CD4-positive, alpha-beta T cell (primary cell): ENCODE measurements at regions of chr6 and their contacts with region 1.

Region 1: GRCh38 chr6:110270165-110270564 is 88.0 kb downstream of the METTL24 start:
- DNase-seq: no peak
- ATAC-seq: no peak
- H3K4me3 ChIP-seq: no peak overlapping the region
- H3K4me3 Mint-ChIP-seq: no peak overlapping the region
- H3K27ac ChIP-seq: no peak overlapping the region
- H3K27ac Mint-ChIP-seq: no peak overlapping the region
- H3K4me1 ChIP-seq: no peaks in the 10 kb centered on the region
- H3K4me1 Mint-ChIP-seq: no peaks in the 10 kb centered on the region
- H3K27me3 ChIP-seq: no peaks in the 10 kb centered on the region
- H3K27me3 Mint-ChIP-seq: peaks cover 6% of the 10 kb centered on the region
- CTCF ChIP-seq: no peak

Region 2: GRCh38 chr6:109139109-109139508 is 1131.1 kb before region 1 on chr6:
- CTCF ChIA-PET with region 1: no interaction called
- POLR2A ChIA-PET with region 1: no interaction called
- intact Hi-C with region 1: loop called in 1 of 2 experiments (anchors 10 kb)
- DNase-seq: no peak
- ATAC-seq: no peak
- H3K4me3 ChIP-seq: no peak overlapping the region
- H3K4me3 Mint-ChIP-seq: no peak overlapping the region
- H3K27ac ChIP-seq: no peak overlapping the region
- H3K27ac Mint-ChIP-seq: no peak overlapping the region
- H3K4me1 ChIP-seq: no peaks in the 10 kb centered on the region
- H3K4me1 Mint-ChIP-seq: no peaks in the 10 kb centered on the region
- H3K27me3 ChIP-seq: no peaks in the 10 kb centered on the region
- H3K27me3 Mint-ChIP-seq: no peaks in the 10 kb centered on the region
- CTCF ChIP-seq: no peak

Region 3: DNA sequence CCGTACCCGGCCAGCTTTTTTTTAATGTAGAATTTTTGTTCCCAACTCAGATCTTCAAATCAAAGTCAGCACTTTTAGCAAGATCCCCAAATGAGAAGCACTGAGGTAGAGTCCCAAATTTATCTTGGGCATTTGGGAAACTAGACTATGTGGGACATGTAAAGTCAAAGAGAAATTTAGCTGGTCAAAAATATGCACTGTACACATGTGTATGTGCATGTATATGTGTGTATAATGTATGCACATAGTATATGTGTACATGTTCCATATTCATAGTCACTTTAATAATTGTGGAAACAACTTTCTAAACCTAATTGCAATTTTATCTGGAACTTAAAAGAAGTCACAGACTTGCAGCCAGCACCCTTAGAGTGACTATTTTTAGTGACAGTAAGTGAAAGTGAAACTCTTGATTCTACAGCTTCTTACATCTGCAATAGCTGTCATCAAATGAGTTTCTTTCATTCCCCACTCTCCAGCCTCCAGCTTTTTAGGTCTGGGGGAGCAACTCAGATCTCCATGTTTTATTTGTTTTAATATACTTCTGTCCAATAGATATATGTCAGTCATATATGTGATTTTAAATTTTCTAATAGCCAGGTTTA is 36.3 kb before region 1 on chr6:
- CTCF ChIA-PET with region 1: no interaction called
- POLR2A ChIA-PET with region 1: no interaction called
- intact Hi-C with region 1: no loop called
- DNase-seq: peak in 3 of 14 experiments; percentile 12 to 49 (median 14)
- ATAC-seq: peak; percentile 43
- H3K4me3 ChIP-seq: no peak overlapping the region
- H3K4me3 Mint-ChIP-seq: no peak overlapping the region
- H3K27ac ChIP-seq: peak overlapping the region in 1 of 2 donors; percentile 15
- H3K27ac Mint-ChIP-seq: peak overlapping the region; percentile 42
- H3K4me1 ChIP-seq: no peaks in the 10 kb centered on the region
- H3K4me1 Mint-ChIP-seq: peaks cover 17% of the 10 kb centered on the region
- H3K27me3 ChIP-seq: no peaks in the 10 kb centered on the region
- H3K27me3 Mint-ChIP-seq: no peaks in the 10 kb centered on the region
- CTCF ChIP-seq: no peak

Region 4: DNA sequence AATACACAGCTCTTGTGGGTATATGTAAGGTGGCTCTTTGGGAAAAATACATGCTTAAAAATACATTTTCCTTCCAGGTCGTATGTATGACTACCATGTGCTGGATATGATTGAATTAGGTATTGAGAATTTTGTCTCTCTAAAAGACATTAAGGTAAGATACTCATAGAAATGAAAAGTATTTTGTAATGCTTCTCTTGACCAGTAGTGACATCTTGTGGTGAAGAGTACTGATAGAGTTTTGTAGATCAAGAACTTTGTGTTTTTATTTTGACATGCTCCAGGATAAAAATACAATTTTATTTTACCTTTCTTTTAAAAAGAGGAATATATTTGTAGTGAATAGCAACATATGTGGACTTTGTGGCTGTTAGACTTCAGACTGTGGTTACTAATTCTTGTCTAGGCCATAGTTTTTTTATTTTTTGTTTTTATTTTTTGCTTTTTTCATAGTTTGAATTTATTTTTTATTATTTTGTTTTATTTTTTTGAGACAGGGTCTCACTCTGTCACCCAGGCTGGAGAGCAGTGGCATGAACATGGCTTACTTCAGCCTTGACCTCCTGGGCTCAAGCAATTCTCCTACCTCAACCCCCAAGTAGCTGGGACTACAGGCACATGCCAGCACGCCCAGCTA is 729.6 kb after region 1 on chr6:
- CTCF ChIA-PET with region 1: no interaction called
- POLR2A ChIA-PET with region 1: no interaction called
- intact Hi-C with region 1: no loop called
- DNase-seq: peak in 3 of 14 experiments; percentile 47 to 56 (median 54)
- ATAC-seq: no peak
- H3K4me3 ChIP-seq: no peak overlapping the region
- H3K4me3 Mint-ChIP-seq: no peak overlapping the region
- H3K27ac ChIP-seq: no peak overlapping the region
- H3K27ac Mint-ChIP-seq: no peak overlapping the region
- H3K4me1 ChIP-seq: no peaks in the 10 kb centered on the region
- H3K4me1 Mint-ChIP-seq: no peaks in the 10 kb centered on the region
- H3K27me3 ChIP-seq: no peaks in the 10 kb centered on the region
- H3K27me3 Mint-ChIP-seq: no peaks in the 10 kb centered on the region
- CTCF ChIP-seq: peak; percentile 50